Gastrocnemius medialis (tissue), 4 donors: ENCODE measurements at regions of chr6 and their contacts with region 1.

Region 1: GRCh38 chr6:148166339-148166968 is 176.2 kb upstream of the SASH1 start:
- DNase-seq: no peak
- ATAC-seq: no peak
- H3K4me3 ChIP-seq: no peak overlapping the region
- H3K27ac ChIP-seq: no peak overlapping the region
- H3K4me1 ChIP-seq: no peaks in the 10 kb centered on the region
- H3K27me3 ChIP-seq: no peaks in the 10 kb centered on the region
- CTCF ChIP-seq: peak; percentile 26 to 62 (median 40)
- POLR2A ChIP-seq: no peak

Region 2: GRCh38 chr6:146857180-146857979 is 1309.1 kb before region 1 on chr6:
- in situ Hi-C with region 1: no loop called
- intact Hi-C with region 1: loop called (anchors 5 kb)
- DNase-seq: peak; percentile 64
- ATAC-seq: peak; percentile 83 to 92
- H3K4me3 ChIP-seq: peak overlapping the region; percentile 23 to 45 (median 36)
- H3K27ac ChIP-seq: peak overlapping the region in 3 of 4 donors; percentile 10 to 44 (median 25)
- H3K4me1 ChIP-seq: peaks cover 0 to 3% of the 10 kb centered on the region in 2 donors
- H3K27me3 ChIP-seq: no peaks in the 10 kb centered on the region
- CTCF ChIP-seq: peak; percentile 93 to 98 (median 94)
- POLR2A ChIP-seq: no peak

Region 3: GRCh38 chr6:147506704-147507114 is 659.7 kb before region 1 on chr6:
- in situ Hi-C with region 1: loop called (anchors 5 to 25 kb)
- intact Hi-C with region 1: loop called (anchors 1 kb)
- DNase-seq: no peak
- ATAC-seq: peak in 1 of 2 donors; percentile 49
- H3K4me3 ChIP-seq: peak overlapping the region; percentile 57 to 69 (median 60)
- H3K27ac ChIP-seq: no peak overlapping the region
- H3K4me1 ChIP-seq: peaks cover 8 to 20% of the 10 kb centered on the region in 2 donors
- H3K27me3 ChIP-seq: peaks cover 27 to 46% (median 37%) of the 10 kb centered on the region in 3 donors
- CTCF ChIP-seq: peak; percentile 41 to 78 (median 68)
- POLR2A ChIP-seq: no peak

Region 4: DNA sequence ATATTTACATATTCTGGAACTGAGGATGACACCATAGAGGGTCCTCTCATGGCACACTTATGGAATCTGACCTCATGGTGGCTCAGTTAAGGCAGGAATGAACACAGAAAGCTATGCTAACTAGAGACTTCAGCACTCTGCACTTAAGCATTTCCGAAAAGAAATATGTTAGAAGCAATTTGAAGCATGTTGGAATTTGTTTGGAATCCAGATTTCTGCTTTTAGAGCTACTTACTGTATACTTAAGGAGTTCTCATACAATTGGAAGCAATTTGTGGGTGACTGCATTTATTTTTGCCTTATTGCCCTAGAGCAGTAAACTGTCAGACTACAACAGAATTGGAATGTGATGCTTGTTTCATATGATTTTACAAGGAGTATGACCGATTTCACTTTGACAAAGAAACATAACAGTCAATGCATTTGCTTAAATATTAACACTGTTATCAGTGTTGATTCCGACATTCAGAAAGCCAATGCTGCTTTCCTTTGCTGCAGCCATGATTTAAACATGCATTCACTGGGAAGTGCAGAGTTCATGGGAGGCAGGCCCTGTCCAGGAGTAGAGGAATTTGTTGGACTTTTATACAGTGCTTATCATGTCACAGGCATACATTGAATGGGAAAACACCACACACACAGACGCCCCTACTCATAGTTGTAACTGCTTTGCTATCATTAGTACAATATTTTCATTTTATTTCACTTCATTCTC is 413.6 kb before region 1 on chr6:
- in situ Hi-C with region 1: no loop called
- intact Hi-C with region 1: no loop called
- DNase-seq: no peak
- ATAC-seq: no peak
- H3K4me3 ChIP-seq: no peak overlapping the region
- H3K27ac ChIP-seq: no peak overlapping the region
- H3K4me1 ChIP-seq: no peaks in the 10 kb centered on the region
- H3K27me3 ChIP-seq: no peaks in the 10 kb centered on the region
- CTCF ChIP-seq: no peak
- POLR2A ChIP-seq: no peak

Region 5: GRCh38 chr6:148240461-148240840 is 74.0 kb after region 1 on chr6:
- in situ Hi-C with region 1: no loop called
- intact Hi-C with region 1: no loop called
- DNase-seq: no peak
- ATAC-seq: no peak
- H3K4me3 ChIP-seq: no peak overlapping the region
- H3K27ac ChIP-seq: peak overlapping the region; percentile 23 to 53 (median 34)
- H3K4me1 ChIP-seq: peaks cover 13 to 32% of the 10 kb centered on the region in 2 donors
- H3K27me3 ChIP-seq: no peaks in the 10 kb centered on the region
- CTCF ChIP-seq: no peak
- POLR2A ChIP-seq: no peak

Region 6: DNA sequence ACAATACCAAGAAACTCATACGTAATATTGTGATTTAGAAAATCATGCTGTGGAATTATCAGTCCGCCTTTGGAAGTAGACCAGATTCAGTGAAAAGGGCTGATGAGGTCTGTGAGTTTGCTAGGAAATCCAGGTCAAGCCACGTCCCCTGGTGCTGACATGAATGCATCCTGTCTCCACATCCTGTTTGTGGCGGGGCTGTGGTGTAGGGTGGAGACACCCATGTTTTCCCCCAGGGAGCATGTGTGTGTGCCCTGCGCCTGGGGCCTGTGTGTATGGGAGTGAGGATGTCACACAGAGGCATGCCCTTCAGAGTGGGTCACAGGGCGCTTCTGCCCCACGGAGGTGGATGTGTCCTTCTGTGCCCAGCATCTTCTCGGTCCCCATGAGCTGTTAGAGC is 285.2 kb after region 1 on chr6:
- in situ Hi-C with region 1: no loop called
- intact Hi-C with region 1: no loop called
- DNase-seq: no peak
- ATAC-seq: peak in 1 of 2 donors; percentile 41
- H3K4me3 ChIP-seq: no peak overlapping the region
- H3K27ac ChIP-seq: peak overlapping the region in 3 of 4 donors; percentile 18 to 56 (median 52)
- H3K4me1 ChIP-seq: peaks cover 10% of the 10 kb centered on the region in 2 donors
- H3K27me3 ChIP-seq: no peaks in the 10 kb centered on the region
- CTCF ChIP-seq: no peak
- POLR2A ChIP-seq: no peak